A673 (cell line): ENCODE measurements at regions of chr18 and their contacts with region 1.

Region 1: GRCh38 chr18:316393-316792 is 48.5 kb upstream of the THOC1 start:
- DNase-seq: no peak
- H3K4me3 ChIP-seq: no peak overlapping the region
- H3K27ac ChIP-seq: no peak overlapping the region
- H3K4me1 ChIP-seq: no peaks in the 10 kb centered on the region
- H3K27me3 ChIP-seq: no peaks in the 10 kb centered on the region
- CTCF ChIP-seq: no peak

Region 2: GRCh38 chr18:275486-275885 is 40.9 kb before region 1 on chr18:
- CTCF ChIA-PET with region 1: no interaction called
- POLR2A ChIA-PET with region 1: no interaction called
- intact Hi-C with region 1: no loop called
- DNase-seq: no peak
- H3K4me3 ChIP-seq: no peak overlapping the region
- H3K27ac ChIP-seq: no peak overlapping the region
- H3K4me1 ChIP-seq: no peaks in the 10 kb centered on the region
- H3K27me3 ChIP-seq: no peaks in the 10 kb centered on the region
- CTCF ChIP-seq: no peak

Region 3: DNA sequence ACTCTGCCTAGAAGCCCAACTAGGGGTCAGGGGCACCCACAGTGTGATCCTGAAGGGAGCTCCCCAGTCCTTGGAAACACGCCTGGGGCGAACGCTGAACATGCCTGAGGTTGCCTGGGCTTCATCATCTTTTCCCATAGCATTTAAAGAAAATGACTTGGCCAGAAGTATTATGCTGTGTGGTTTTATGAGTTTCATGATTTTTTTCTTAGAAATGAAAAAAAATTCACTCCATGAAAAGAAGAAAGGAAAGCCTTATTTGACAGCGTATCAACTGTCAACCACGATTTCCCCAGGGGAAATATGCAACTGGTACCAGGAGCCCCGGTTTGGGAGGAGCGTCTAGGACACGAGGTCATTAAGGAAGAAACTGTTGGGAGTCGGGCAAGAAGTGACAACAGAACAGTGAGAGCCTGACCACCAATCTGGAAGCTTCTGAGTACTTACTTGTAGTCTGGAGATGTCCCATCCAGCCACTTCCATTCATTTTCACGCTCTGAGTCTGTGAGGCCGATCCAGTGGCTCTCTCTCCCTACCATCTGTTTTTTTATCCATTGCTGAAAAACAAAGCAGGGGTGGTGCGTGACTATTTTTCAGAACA is 14.9 kb after region 1 on chr18:
- CTCF ChIA-PET with region 1: no interaction called
- POLR2A ChIA-PET with region 1: no interaction called
- intact Hi-C with region 1: no loop called
- DNase-seq: peak; percentile 3
- H3K4me3 ChIP-seq: no peak overlapping the region
- H3K27ac ChIP-seq: no peak overlapping the region
- H3K4me1 ChIP-seq: no peaks in the 10 kb centered on the region
- H3K27me3 ChIP-seq: no peaks in the 10 kb centered on the region
- CTCF ChIP-seq: no peak

Region 4: GRCh38 chr18:371609-371982 is 55.2 kb after region 1 on chr18:
- CTCF ChIA-PET with region 1: no interaction called
- POLR2A ChIA-PET with region 1: no interaction called
- intact Hi-C with region 1: no loop called
- DNase-seq: no peak
- H3K4me3 ChIP-seq: no peak overlapping the region
- H3K27ac ChIP-seq: no peak overlapping the region
- H3K4me1 ChIP-seq: no peaks in the 10 kb centered on the region
- H3K27me3 ChIP-seq: no peaks in the 10 kb centered on the region
- CTCF ChIP-seq: no peak

Region 5: GRCh38 chr18:527146-527545 is 210.8 kb after region 1 on chr18:
- CTCF ChIA-PET with region 1: no interaction called
- POLR2A ChIA-PET with region 1: no interaction called
- intact Hi-C with region 1: no loop called
- DNase-seq: no peak
- H3K4me3 ChIP-seq: no peak overlapping the region
- H3K27ac ChIP-seq: no peak overlapping the region
- H3K4me1 ChIP-seq: no peaks in the 10 kb centered on the region
- H3K27me3 ChIP-seq: no peaks in the 10 kb centered on the region
- CTCF ChIP-seq: no peak

Region 6: GRCh38 chr18:582465-582864 is 266.1 kb after region 1 on chr18:
- CTCF ChIA-PET with region 1: no interaction called
- POLR2A ChIA-PET with region 1: interaction called, 12 read pairs
- intact Hi-C with region 1: no loop called
- DNase-seq: no peak
- H3K4me3 ChIP-seq: no peak overlapping the region
- H3K27ac ChIP-seq: no peak overlapping the region
- H3K4me1 ChIP-seq: no peaks in the 10 kb centered on the region
- H3K27me3 ChIP-seq: no peaks in the 10 kb centered on the region
- CTCF ChIP-seq: no peak